ENCODE measurements at regions of chr16 and their contacts with region 1.

Region 1: GRCh38 chr16:84284154-84284722 is 10.4 kb upstream of the WFDC1 start:
- DNase-seq: no peak
- H3K4me3 ChIP-seq: no peak overlapping the region
- H3K27ac ChIP-seq: peak overlapping the region; percentile 37 to 56
- H3K4me1 ChIP-seq: no peaks in the 10 kb centered on the region
- H3K27me3 ChIP-seq: no peaks in the 10 kb centered on the region
- CTCF ChIP-seq: no peak
- POLR2A ChIP-seq: no peak

Region 2: DNA sequence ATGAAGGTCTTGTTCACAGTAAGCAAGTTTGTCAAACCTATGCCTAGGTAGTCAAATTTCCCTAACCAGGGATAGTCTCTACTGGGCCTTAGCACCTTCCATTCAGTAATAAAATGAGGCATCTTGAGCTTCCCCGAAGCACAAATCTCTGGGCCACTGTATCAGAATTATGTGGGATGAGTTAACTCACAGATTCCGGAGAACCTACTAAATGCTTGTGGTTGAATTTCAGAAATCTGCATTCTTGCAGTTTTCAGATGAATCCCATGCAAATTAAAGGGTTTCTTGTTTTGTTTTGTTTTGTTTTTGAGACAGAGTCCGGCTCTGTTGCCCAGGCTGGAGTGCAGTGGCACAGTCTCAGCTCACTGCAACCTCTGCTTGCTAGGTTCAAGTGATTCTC is 955.3 kb before region 1 on chr16:
- intact Hi-C with region 1: no loop called
- DNase-seq: no peak
- H3K4me3 ChIP-seq: no peak overlapping the region
- H3K27ac ChIP-seq: no peak overlapping the region
- H3K4me1 ChIP-seq: no peaks in the 10 kb centered on the region
- H3K27me3 ChIP-seq: no peaks in the 10 kb centered on the region
- CTCF ChIP-seq: no peak
- POLR2A ChIP-seq: no peak

Region 3: DNA sequence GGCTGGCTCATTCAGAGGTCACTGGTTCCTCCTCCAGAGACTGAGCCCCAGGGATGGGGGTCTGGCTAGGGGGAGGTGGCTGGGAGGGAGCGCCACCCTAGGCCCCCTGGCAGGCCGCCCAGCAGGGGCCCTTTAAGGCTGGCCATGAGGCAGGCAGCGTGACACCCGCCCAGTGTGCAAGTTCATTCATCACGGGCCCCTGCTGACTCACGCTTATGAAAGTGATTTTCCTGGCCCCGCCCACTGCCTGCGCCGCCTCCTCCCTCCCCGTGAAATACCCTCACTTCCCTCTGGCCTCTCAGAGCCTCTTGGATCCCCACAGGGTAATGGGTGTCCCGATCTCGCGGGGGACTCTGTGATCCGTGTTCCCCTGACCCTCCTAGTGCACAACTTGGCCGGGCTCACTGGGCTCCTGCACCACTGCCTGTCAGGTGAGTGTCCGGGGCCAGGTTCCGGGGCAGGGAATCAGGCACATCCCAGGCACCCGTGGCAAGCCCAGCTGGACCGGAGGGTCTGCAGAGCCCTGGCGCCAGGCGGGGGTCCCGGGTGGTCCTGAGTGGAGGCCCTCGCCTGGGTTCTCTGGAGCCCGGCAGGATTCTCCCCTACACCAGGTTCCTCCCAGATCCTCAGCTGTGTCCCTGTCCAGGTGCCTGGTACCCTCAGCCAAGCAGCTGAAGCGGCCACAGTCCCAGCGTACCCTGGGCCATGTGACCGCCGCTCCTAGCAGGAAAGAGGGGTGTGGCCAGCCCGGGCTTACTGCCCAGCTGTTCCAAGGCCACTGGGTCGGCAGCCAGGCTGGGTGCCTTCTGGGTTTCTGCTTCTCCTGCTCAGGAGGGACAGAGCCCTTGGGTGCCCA is 331.1 kb before region 1 on chr16 and contains the start of gene OSGIN1:
- intact Hi-C with region 1: loop called (anchors 10 kb)
- DNase-seq: peak; percentile 96
- H3K4me3 ChIP-seq: peak within 1 kb of the TSS; percentile 41 to 52
- H3K27ac ChIP-seq: peak within 1 kb of the TSS; percentile 92
- H3K4me1 ChIP-seq: peaks cover 4% of the 10 kb centered on the region
- H3K27me3 ChIP-seq: no peaks in the 10 kb centered on the region
- CTCF ChIP-seq: no peak
- POLR2A ChIP-seq: peak; percentile 73
- total RNA-seq, gene OSGIN1: 4.4 to 9.4 TPM

Region 4: DNA sequence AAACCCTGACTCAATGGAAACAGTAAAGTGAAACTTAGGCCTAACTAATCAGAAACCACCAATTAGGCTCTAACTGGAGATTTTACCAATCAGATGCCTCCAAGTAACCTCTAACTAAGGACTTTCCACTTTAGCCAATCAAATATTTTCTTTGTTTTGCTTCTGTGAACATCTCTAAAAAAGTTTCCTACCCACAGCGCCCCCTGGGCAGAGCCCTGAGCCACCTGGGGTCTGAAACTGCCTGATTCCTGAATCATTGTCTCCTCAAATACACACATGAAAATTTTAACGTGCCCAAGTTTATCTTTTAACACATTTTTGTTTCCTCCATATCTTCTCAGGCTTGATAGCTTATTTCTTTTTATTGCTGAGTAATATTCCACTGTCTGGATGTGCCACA is 74.2 kb before region 1 on chr16:
- intact Hi-C with region 1: no loop called
- DNase-seq: no peak
- H3K4me3 ChIP-seq: no peak overlapping the region
- H3K27ac ChIP-seq: no peak overlapping the region
- H3K4me1 ChIP-seq: no peaks in the 10 kb centered on the region
- H3K27me3 ChIP-seq: no peaks in the 10 kb centered on the region
- CTCF ChIP-seq: no peak
- POLR2A ChIP-seq: no peak

Region 5: DNA sequence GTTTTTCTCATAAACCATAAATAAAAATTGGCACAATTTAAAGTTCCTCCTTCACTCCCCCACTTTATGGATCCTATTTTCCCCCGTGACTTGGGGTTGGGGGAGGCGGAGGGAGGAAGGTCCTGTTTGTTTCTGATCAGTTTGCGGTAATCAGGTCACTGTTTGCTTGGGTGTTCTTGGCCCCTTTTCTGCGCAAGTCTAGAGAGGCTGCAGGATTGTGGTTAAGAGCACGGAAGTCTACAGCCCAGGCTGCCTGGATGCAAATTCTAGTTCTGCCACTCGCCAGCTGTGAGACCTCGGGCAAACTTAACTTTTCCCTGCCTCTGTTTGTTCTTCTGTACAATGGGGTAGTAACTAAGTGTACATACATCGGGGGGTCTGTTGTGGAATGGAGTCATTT is 96.2 kb after region 1 on chr16:
- intact Hi-C with region 1: no loop called
- DNase-seq: peak; percentile 41
- H3K4me3 ChIP-seq: no peak overlapping the region
- H3K27ac ChIP-seq: peak overlapping the region; percentile 40 to 41
- H3K4me1 ChIP-seq: no peaks in the 10 kb centered on the region
- H3K27me3 ChIP-seq: no peaks in the 10 kb centered on the region
- CTCF ChIP-seq: no peak
- POLR2A ChIP-seq: no peak